ENCODE measurements at regions of chr11 and their contacts with region 1.

Region 1: GRCh38 chr11:123020968-123021367 is 39.3 kb upstream of the BSX start:
- DNase-seq: peak in 1 of 2 experiments; percentile 6
- H3K4me3 ChIP-seq: no peak overlapping the region
- H3K27ac ChIP-seq: no peak overlapping the region
- H3K4me1 ChIP-seq: peaks cover 5% of the 10 kb centered on the region; the same call in 1 of the 2 replicates
- H3K27me3 ChIP-seq: no peaks in the 10 kb centered on the region
- CTCF ChIP-seq: peak; percentile 73

Region 2: GRCh38 chr11:122578168-122578825 is 442.7 kb before region 1 on chr11:
- CTCF ChIA-PET with region 1: no interaction called
- POLR2A ChIA-PET with region 1: no interaction called
- intact Hi-C with region 1: loop called (anchors 2 kb)
- DNase-seq: no peak
- H3K4me3 ChIP-seq: no peak overlapping the region
- H3K27ac ChIP-seq: no peak overlapping the region
- H3K4me1 ChIP-seq: peaks cover 11% of the 10 kb centered on the region
- H3K27me3 ChIP-seq: no peaks in the 10 kb centered on the region
- CTCF ChIP-seq: no peak

Region 3: GRCh38 chr11:122612123-122612824 is 408.7 kb before region 1 on chr11:
- CTCF ChIA-PET with region 1: interaction called, 10 read pairs
- POLR2A ChIA-PET with region 1: no interaction called
- intact Hi-C with region 1: no loop called
- DNase-seq: peak in 1 of 2 experiments; percentile 60
- H3K4me3 ChIP-seq: no peak overlapping the region
- H3K27ac ChIP-seq: no peak overlapping the region
- H3K4me1 ChIP-seq: peaks cover 17% of the 10 kb centered on the region
- H3K27me3 ChIP-seq: no peaks in the 10 kb centered on the region
- CTCF ChIP-seq: no peak

Region 4: DNA sequence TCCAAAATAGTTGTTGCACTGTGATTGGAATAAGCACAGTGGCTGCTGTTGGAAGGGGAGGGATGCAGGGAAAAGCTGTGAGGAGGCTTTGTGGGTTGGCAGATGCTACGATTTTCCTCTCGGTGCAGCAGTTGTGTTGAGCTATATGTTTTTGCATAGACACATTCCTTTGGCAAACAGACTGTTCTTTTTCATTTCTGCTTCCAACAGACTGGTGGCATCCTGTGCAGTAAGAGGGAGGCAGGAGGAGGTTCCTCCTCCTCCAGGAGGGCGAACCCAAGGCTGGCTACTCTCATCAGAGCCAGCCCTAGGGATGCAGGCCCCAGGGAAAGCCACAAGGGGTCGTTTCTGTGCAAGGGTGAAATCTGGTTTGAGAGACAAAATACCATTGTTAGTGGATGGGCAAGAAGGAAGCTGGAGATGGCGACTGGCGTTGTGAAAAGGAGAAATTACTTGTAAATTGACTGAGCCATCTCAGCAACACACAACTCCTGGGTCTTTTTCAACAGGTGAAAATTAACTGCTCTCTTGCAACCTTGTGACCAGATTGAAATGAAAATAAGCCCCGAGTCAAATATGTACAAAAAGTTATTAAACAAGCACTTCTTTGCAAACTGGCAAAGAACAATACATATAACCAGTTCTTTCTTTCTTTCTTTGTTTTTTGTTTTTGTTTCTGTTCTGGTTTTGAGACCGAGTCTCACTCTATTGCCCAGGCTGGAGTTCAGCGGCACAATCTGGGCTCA is 392.0 kb before region 1 on chr11:
- CTCF ChIA-PET with region 1: interaction called, 8 read pairs
- POLR2A ChIA-PET with region 1: no interaction called
- intact Hi-C with region 1: loop called (anchors 1 kb)
- DNase-seq: peak; percentile 53 to 65
- H3K4me3 ChIP-seq: no peak overlapping the region
- H3K27ac ChIP-seq: no peak overlapping the region
- H3K4me1 ChIP-seq: peaks cover 36% of the 10 kb centered on the region
- H3K27me3 ChIP-seq: no peaks in the 10 kb centered on the region
- CTCF ChIP-seq: peak; percentile 86

Region 5: GRCh38 chr11:122796128-122796717 is 224.7 kb before region 1 on chr11:
- CTCF ChIA-PET with region 1: interaction called, 7 read pairs
- POLR2A ChIA-PET with region 1: no interaction called
- intact Hi-C with region 1: loop called (anchors 1 kb)
- DNase-seq: peak in 1 of 2 experiments; percentile 46
- H3K4me3 ChIP-seq: no peak overlapping the region
- H3K27ac ChIP-seq: no peak overlapping the region
- H3K4me1 ChIP-seq: peaks cover 13% of the 10 kb centered on the region
- H3K27me3 ChIP-seq: no peaks in the 10 kb centered on the region
- CTCF ChIP-seq: peak; percentile 96

Region 6: DNA sequence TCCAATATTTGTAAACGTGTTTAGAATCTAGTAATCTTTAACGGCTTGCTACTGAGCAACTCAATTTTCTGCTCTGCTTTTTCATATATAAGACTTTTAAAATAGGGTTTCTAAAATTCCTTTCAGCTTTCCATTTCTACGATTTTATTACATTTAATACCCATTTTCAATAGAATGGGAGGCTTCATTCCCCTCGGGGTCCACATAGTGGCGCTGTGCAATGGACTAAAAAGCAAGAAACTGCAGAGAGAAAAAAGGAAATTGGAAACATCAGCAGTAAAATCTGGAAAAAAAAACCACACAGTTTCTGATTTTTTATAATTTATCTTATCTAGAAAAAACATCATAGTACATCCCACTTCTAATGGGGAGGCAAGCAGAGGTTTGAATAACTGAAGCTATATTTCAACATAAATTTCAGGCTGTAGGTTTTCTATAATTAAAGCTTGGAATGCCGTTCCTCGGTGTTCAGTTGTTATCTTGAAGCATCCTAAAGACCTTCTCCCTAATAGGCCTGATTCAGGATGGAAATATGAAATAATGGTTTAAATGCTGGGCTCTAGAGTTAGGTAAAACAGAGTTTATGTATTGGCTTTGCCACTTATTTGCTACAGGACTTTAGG is 157.2 kb before region 1 on chr11:
- CTCF ChIA-PET with region 1: interaction called, 16 read pairs
- POLR2A ChIA-PET with region 1: interaction called, 6 read pairs
- intact Hi-C with region 1: loop called (anchors 1 kb)
- DNase-seq: peak in 1 of 2 experiments; percentile 37
- H3K4me3 ChIP-seq: no peak overlapping the region
- H3K27ac ChIP-seq: 0 out of 2 replicates have a peak overlapping the region, but pooled peaks have one; percentile 5
- H3K4me1 ChIP-seq: peaks cover 35% of the 10 kb centered on the region
- H3K27me3 ChIP-seq: no peaks in the 10 kb centered on the region
- CTCF ChIP-seq: peak; percentile 93

Region 7: GRCh38 chr11:122910775-122911174 is 110.2 kb before region 1 on chr11:
- CTCF ChIA-PET with region 1: no interaction called
- POLR2A ChIA-PET with region 1: no interaction called
- intact Hi-C with region 1: loop called (anchors 5 kb)
- DNase-seq: no peak
- H3K4me3 ChIP-seq: no peak overlapping the region
- H3K27ac ChIP-seq: no peak overlapping the region
- H3K4me1 ChIP-seq: no peaks in the 10 kb centered on the region
- H3K27me3 ChIP-seq: no peaks in the 10 kb centered on the region
- CTCF ChIP-seq: peak; percentile 36; the same call in 1 of the 2 replicates

Region 8: GRCh38 chr11:123083623-123084029 is 62.7 kb after region 1 on chr11:
- CTCF ChIA-PET with region 1: no interaction called
- POLR2A ChIA-PET with region 1: no interaction called
- intact Hi-C with region 1: no loop called
- DNase-seq: peak; percentile 90 to 95
- H3K4me3 ChIP-seq: no peak overlapping the region
- H3K27ac ChIP-seq: peak overlapping the region; percentile 38
- H3K4me1 ChIP-seq: peaks cover 22% of the 10 kb centered on the region
- H3K27me3 ChIP-seq: no peaks in the 10 kb centered on the region
- CTCF ChIP-seq: no peak

Region 9: GRCh38 chr11:123183391-123184099 is 162.6 kb after region 1 on chr11:
- CTCF ChIA-PET with region 1: no interaction called
- POLR2A ChIA-PET with region 1: no interaction called
- intact Hi-C with region 1: no loop called
- DNase-seq: peak in 1 of 2 experiments; percentile 57
- H3K4me3 ChIP-seq: no peak overlapping the region
- H3K27ac ChIP-seq: peak overlapping the region; percentile 2; the same call in 1 of the 2 replicates
- H3K4me1 ChIP-seq: peaks cover 90% of the 10 kb centered on the region
- H3K27me3 ChIP-seq: no peaks in the 10 kb centered on the region
- CTCF ChIP-seq: no peak

Region 10: GRCh38 chr11:123268118-123268517 is 247.2 kb after region 1 on chr11:
- CTCF ChIA-PET with region 1: no interaction called
- POLR2A ChIA-PET with region 1: no interaction called
- intact Hi-C with region 1: no loop called
- DNase-seq: no peak
- H3K4me3 ChIP-seq: no peak overlapping the region
- H3K27ac ChIP-seq: no peak overlapping the region
- H3K4me1 ChIP-seq: peaks cover 20% of the 10 kb centered on the region
- H3K27me3 ChIP-seq: no peaks in the 10 kb centered on the region
- CTCF ChIP-seq: no peak

Measured in PC-9 (cell line).